Activated CD4-positive, alpha-beta memory T cell treated with anti-CD3 and anti-CD28 coated beads for 36 hours (primary cell): ENCODE measurements at regions of chr9 and their contacts with region 1.

Region 1: DNA sequence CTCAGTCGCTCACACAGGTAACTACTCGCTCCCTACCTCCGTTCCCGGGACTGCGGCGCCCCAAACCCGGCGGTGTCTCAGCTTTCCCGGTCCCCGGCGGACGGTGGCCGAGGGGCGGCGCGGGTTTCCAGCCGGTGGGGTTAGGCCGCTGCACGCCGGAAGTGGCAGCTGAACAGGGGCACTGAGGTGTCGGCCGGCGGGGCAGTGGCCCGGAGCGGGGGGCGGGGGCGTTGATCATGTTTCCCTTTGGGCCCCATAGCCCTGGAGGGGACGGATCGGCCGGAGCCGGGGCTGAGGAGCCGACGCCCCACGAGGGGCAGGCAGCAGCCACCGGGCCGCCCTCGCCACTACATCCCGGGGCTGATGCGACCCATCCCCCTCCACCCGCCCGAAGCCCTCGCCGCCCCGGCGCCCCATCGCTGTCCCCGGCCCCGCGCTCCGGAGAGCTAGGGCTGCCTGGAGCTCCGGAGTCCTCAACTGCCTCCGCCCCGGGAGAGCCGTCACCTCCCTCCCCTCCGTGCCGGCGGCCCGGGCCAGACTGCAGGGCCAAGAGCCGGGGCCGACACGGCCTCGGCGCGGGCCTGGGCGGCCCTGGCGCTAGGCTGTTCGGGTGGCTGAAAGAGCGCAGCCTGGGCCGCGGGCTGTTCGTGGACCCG is at the start of gene DCAF10:
- DNase-seq: peak; percentile 92
- H3K4me3 Mint-ChIP-seq: peak within 1 kb of the TSS; percentile 93
- H3K27ac Mint-ChIP-seq: peak within 1 kb of the TSS; percentile 85
- H3K4me1 Mint-ChIP-seq: peaks cover 40% of the 10 kb centered on the region
- H3K27me3 Mint-ChIP-seq: no peaks in the 10 kb centered on the region
- total RNA-seq, gene DCAF10: 13.8 to 17.2 TPM

Region 2: GRCh38 chr9:37784616-37785483 is 15.9 kb before region 1 on chr9 and contains the start of gene EXOSC3:
- CTCF ChIA-PET with region 1: interaction called, 3 read pairs
- POLR2A ChIA-PET with region 1: interaction called, 28 read pairs
- intact Hi-C with region 1: loop called (anchors 1 kb)
- DNase-seq: peak; percentile 93
- H3K4me3 Mint-ChIP-seq: peak within 1 kb of the TSS; percentile 98
- H3K27ac Mint-ChIP-seq: peak within 1 kb of the TSS; percentile 93
- H3K4me1 Mint-ChIP-seq: peaks cover 38% of the 10 kb centered on the region
- H3K27me3 Mint-ChIP-seq: no peaks in the 10 kb centered on the region
- total RNA-seq, gene EXOSC3: 97.5 to 97.9 TPM

Region 3: DNA sequence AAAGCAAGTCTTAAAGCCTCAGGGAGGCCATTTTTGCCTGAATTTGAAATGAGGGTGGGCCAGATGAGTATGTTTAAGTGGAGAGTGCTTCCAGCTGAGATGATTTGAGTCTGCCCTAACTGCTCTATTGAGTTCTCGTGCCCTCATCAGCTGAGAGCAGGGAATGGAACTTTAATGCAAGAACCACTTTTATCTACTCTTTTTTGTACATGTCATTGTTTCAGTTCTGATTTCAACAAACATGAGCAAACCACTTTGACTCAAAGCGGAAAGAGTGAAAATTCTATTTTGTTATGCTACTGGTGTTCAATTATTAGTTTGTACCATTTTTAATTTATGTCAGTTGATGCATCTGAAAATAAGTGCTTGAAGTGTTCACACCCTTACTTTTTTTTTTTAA is 35.6 kb after region 1 on chr9:
- CTCF ChIA-PET with region 1: no interaction called
- POLR2A ChIA-PET with region 1: no interaction called
- intact Hi-C with region 1: loop called (anchors 5 kb)
- DNase-seq: peak; percentile 31
- H3K4me3 Mint-ChIP-seq: no peak overlapping the region
- H3K27ac Mint-ChIP-seq: no peak overlapping the region
- H3K4me1 Mint-ChIP-seq: peaks cover 11% of the 10 kb centered on the region
- H3K27me3 Mint-ChIP-seq: no peaks in the 10 kb centered on the region